Motor neuron (in vitro differentiated cells): ENCODE measurements at regions of chr6 and their contacts with region 1.

Region 1: DNA sequence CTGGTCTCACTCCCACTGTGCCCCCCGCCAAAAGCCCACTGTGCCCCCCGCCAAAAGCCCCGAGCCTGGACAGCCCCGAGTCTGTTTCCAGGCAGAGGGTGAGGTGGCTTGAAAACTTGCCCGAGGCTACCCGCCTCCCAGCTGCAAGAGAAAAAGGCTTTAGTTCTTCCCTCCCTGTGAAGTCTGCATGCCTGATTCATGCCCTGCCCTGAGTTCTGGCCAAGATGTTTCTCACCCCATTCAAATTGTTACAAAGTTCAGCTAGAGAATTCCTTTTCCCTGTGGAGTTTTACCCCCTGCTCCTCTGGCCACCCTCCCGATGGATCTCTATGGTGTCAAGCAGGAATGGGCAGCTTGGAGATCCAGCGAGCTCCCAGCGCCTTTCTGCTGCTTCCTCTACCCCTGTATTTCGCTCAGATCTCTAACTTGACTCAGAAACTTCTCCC is 298.8 kb upstream of the MAP3K7 start:
- ATAC-seq: peak in 4 of 8 experiments; percentile 67 to 99 (median 92)
- H3K4me3 ChIP-seq: no peak overlapping the region
- H3K27ac ChIP-seq: no peak overlapping the region
- H3K4me1 ChIP-seq: peaks cover 14 to 17% of the 10 kb centered on the region in 2 donors

Region 2: DNA sequence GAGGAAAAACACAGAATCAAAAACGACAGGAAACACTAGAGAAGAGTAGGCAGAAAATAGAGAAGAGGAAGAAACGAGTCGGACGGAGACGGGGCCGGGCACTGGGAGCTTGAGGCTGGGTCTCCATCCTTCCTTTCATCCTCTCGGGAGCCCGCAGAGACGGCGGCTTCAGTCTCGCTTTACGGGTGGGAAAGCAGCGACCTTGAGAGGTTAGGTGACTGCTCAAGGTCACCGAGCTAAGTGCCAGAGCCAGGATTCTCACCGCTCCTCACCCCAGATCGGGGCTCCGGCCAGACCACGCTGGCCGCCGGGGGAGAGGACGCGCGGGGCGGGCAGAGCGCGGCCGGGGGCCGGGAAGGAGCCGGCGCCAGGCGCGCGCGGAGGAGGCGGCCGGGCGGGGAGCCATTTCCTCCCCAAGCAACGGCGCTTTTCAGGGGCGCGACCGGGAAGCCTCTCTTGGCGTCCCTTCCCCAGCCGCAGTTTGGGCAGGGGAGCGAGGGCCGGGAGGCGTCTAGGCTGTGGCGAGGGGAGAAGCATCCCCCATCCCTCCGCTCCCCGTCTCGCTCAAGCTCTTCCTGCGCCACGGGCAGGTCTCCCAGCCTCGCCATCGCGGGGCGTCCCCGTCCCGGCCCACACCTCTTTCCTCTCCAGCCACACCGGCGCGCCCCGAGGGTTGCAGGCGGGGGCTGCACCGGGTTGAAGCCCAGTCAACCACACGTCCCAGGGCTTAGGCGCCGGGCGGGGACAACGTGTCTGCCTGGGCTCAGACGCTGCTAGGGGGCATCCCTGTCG is 274.7 kb before region 1 on chr6:
- in situ Hi-C with region 1: loop called in 1 of 9 experiments (anchors 25 kb)
- ATAC-seq: peak; percentile 55 to 89 (median 85)
- H3K4me3 ChIP-seq: peak overlapping the region; percentile 26 to 68 (median 38)
- H3K27ac ChIP-seq: peak overlapping the region; percentile 4 to 31
- H3K4me1 ChIP-seq: peaks cover 4 to 17% of the 10 kb centered on the region in 2 donors

Region 3: GRCh38 chr6:90715093-90715655 is 170.5 kb before region 1 on chr6:
- in situ Hi-C with region 1: no loop called
- ATAC-seq: no peak
- H3K4me3 ChIP-seq: no peak overlapping the region
- H3K27ac ChIP-seq: no peak overlapping the region
- H3K4me1 ChIP-seq: peaks cover 0 to 4% of the 10 kb centered on the region in 2 donors